ENCODE measurements at regions of chr19 and their contacts with region 1.

Region 1: GRCh38 chr19:45439569-45440254 is 16.0 kb upstream of the ERCC1 start:
- DNase-seq: peak; percentile 90
- ATAC-seq: peak; percentile 70
- H3K4me3 Mint-ChIP-seq: peak overlapping the region; percentile 56
- H3K27ac Mint-ChIP-seq: peak overlapping the region; percentile 63
- H3K4me1 Mint-ChIP-seq: peaks cover 33% of the 10 kb centered on the region
- H3K27me3 Mint-ChIP-seq: no peaks in the 10 kb centered on the region

Region 2: DNA sequence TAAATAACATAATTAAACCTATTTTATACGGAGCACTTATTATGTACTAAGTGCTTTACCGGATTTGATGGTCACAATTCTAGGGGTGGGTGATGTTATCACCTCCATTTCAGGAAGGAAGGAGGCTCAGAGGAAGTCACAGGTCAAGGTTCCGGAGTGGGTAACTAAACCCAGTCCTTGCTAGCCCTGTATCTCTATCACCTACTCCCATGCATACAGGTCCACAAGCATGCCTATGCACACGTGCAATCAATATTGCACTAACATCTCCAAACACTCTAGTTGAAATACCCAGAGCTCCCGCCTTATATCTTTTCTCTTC is 10.3 kb after region 1 on chr19:
- CTCF ChIA-PET with region 1: interaction called, 15 read pairs
- POLR2A ChIA-PET with region 1: no interaction called
- intact Hi-C with region 1: no loop called
- DNase-seq: no peak
- ATAC-seq: peak; percentile 24
- H3K4me3 Mint-ChIP-seq: peak overlapping the region; percentile 95
- H3K27ac Mint-ChIP-seq: peak overlapping the region; percentile 97
- H3K4me1 Mint-ChIP-seq: peaks cover 34% of the 10 kb centered on the region
- H3K27me3 Mint-ChIP-seq: no peaks in the 10 kb centered on the region

Region 3: GRCh38 chr19:45469132-45469944 is 29.6 kb after region 1 on chr19:
- CTCF ChIA-PET with region 1: interaction called, 24 read pairs
- POLR2A ChIA-PET with region 1: interaction called, 20 read pairs
- intact Hi-C with region 1: loop called (anchors 1 kb)
- DNase-seq: peak; percentile 97
- ATAC-seq: peak; percentile 82
- H3K4me3 Mint-ChIP-seq: peak overlapping the region; percentile 78
- H3K27ac Mint-ChIP-seq: peak overlapping the region; percentile 86
- H3K4me1 Mint-ChIP-seq: peaks cover 29% of the 10 kb centered on the region
- H3K27me3 Mint-ChIP-seq: peaks cover 11% of the 10 kb centered on the region

Region 4: DNA sequence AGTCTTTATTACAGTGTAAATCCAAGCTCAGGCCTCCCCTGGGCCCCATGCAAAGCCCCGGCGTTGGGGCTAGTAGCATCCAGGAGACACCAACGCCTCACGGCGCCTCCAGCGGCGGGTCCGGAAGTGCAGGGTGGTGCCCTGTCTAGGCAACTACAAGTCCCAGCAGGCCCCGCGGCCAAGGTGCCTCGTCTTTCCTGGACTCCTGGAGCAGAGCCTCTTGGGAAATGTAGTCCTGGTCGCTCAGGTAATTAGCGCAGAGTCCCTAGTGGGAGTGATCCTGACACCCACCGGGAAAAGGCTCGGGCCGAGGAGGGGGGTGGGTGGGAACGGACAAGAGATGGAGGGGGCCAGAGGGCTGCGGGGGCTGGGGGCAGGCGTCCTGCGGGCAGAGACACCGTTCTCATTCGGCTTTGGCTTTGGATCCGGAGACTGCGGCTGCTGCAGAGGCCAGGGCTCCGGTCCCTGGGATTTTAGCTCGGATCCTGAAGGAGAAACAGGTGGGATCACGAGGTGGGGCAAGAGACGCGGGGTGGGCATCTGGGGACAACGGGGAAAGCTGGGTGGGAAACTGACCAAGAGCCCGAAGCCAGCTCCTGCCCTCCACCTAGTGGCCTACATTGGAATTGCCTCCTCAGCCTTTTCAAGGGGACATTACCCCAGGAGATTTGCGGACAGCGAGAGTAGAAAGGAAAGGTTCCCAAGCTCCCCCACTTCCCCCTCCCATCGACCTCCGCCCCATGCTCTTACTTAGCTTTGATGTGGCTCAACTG is 45.8 kb after region 1 on chr19:
- CTCF ChIA-PET with region 1: interaction called, 158 read pairs
- POLR2A ChIA-PET with region 1: interaction called, 6 read pairs
- intact Hi-C with region 1: loop called (anchors 1 kb)
- DNase-seq: peak; percentile 100
- ATAC-seq: peak; percentile 99
- H3K4me3 Mint-ChIP-seq: peak overlapping the region; percentile 83
- H3K27ac Mint-ChIP-seq: peak overlapping the region; percentile 91
- H3K4me1 Mint-ChIP-seq: peaks cover 13% of the 10 kb centered on the region
- H3K27me3 Mint-ChIP-seq: peaks cover 2% of the 10 kb centered on the region

Region 5: GRCh38 chr19:45564131-45564780 is 124.5 kb after region 1 on chr19:
- CTCF ChIA-PET with region 1: no interaction called
- POLR2A ChIA-PET with region 1: no interaction called
- intact Hi-C with region 1: loop called in 1 of 2 experiments (anchors 5 kb)
- DNase-seq: no peak
- ATAC-seq: peak; percentile 48
- H3K4me3 Mint-ChIP-seq: no peak overlapping the region
- H3K27ac Mint-ChIP-seq: peak overlapping the region; percentile 30
- H3K4me1 Mint-ChIP-seq: peaks cover 24% of the 10 kb centered on the region
- H3K27me3 Mint-ChIP-seq: no peaks in the 10 kb centered on the region

Region 6: DNA sequence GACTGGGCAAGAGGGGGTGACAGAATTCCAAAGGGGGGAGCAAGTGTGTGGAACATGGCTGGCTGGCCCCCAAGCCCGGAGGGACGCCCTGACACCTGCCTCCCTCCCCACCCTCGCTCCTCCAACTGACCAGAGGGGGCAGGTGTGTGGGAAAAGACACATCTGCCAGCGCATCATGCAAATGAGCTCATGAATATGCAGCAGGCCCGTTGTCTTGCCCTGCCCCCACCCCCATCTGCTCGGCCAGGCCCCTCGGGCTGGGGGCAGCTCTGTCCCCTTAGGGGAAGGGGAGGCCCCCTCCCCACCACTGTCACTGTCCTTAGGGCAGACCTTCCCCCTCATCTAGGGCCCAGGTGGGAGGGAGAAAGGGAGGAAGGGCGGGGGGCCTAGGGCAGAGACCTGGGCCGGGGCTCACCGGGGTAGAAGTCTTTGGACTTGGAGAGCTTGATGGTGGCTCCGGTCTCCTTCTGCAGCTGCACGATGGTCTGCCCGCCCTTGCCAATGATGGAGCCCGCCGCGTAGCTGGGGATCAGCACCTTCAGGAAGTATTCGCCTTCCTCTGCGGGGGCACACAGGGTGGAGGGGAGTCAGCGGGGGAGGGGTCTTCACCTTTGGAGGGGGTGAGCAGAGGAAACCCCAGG is 521.0 kb after region 1 on chr19:
- CTCF ChIA-PET with region 1: no interaction called
- POLR2A ChIA-PET with region 1: no interaction called
- intact Hi-C with region 1: no loop called
- DNase-seq: no peak
- ATAC-seq: no peak
- H3K4me3 Mint-ChIP-seq: no peak overlapping the region
- H3K27ac Mint-ChIP-seq: no peak overlapping the region
- H3K4me1 Mint-ChIP-seq: no peaks in the 10 kb centered on the region
- H3K27me3 Mint-ChIP-seq: peaks cover 38% of the 10 kb centered on the region

Measured in activated CD4-positive, alpha-beta T cell treated with anti-CD3 and anti-CD28 coated beads for 36 hours (primary cell).